OCI-LY7 (cell line): ENCODE measurements at regions of chr1 and their contacts with region 1.

Region 1: DNA sequence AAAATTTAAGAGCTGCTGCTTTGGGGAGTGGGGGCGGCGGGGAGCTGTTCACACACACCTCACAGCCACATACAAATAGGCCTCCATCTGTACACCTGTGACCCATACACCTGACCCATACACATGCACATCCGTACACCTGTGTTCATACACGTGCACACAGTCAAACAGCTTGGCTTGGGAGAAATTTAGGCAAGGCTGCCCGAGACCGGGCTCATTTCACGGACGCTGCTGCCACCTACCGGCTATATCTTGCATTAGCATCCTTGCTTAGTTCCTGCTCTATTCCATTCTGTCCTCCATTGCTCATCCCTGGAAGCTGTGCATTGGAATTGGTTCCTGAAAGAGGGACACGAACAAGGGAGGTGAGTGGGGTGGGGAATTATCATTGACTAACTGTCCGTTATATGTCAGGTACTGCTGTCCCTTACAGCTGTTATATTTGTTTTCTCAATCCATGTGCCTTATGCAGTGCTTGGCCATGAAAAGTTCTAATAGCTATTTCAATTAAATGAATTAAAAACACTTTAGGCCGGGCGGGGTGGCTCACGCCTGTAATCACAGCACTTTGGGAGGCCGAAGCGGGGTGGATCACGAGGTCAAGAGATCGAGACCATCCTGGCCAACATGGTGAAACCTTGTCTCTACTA is 37.1 kb upstream of the EPB41 start:
- DNase-seq: peak; percentile 84
- H3K4me3 ChIP-seq: no peak overlapping the region
- H3K27ac ChIP-seq: no peak overlapping the region
- H3K4me1 ChIP-seq: peaks cover 6% of the 10 kb centered on the region
- CTCF ChIP-seq: peak; percentile 98

Region 2: DNA sequence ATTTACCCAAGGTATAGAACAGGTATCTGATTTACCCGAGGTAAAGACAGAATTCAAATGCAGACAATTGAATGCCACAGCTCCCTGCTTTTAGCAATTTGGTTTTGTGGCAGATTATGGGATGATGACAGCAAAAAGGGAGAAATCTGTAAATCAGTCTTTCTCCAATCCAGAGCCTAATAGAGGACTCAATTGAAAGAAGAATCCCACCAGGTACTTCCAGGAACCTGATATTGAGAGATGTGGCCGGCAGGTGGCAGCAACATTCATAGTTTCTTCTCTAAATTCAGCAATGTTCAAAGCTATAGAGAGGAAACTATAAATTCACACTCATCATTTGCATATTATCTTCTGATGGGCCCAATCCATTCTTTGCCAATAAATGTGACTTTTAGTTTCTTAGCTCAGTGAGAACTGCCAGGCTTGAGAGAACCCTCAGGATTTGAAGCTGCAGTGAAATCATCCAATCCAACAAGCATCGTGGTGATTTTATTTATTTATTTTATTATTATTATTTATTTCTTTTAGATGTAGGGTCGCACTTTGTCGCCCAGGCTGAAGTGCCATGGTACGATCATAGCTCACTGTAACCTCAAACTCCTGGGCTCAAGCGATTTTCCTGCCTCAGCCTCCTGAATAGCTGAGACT is 517.5 kb before region 1 on chr1:
- CTCF ChIA-PET with region 1: no interaction called
- POLR2A ChIA-PET with region 1: no interaction called
- intact Hi-C with region 1: loop called (anchors 5 kb)
- DNase-seq: peak; percentile 77
- H3K4me3 ChIP-seq: no peak overlapping the region
- H3K27ac ChIP-seq: no peak overlapping the region
- H3K4me1 ChIP-seq: no peaks in the 10 kb centered on the region
- CTCF ChIP-seq: peak; percentile 92

Region 3: DNA sequence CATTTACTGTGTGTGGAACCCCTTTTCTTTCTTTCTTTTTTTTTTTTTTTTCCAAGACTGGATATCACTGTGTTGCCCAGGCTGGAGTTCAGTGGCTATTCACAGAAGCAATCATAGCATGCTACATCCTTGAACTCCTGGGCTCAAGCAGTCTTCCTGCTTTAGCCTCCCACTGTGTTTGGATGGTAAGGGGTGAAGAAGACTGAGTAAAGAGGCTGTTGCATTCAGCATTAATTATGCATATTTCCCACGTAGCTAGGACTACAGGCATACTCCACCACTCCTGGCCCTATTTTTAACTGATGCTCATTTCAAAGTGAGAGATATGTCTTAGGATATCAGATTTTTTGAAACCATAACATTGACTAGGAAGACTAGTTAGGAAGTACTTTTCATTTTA is 468.2 kb before region 1 on chr1:
- CTCF ChIA-PET with region 1: no interaction called
- POLR2A ChIA-PET with region 1: no interaction called
- intact Hi-C with region 1: loop called (anchors 5 kb)
- DNase-seq: no peak
- H3K4me3 ChIP-seq: no peak overlapping the region
- H3K27ac ChIP-seq: no peak overlapping the region
- H3K4me1 ChIP-seq: peaks cover 12% of the 10 kb centered on the region
- CTCF ChIP-seq: no peak

Region 4: GRCh38 chr1:28648474-28649198 is 228.6 kb before region 1 on chr1 and contains the start of gene RNU11:
- CTCF ChIA-PET with region 1: no interaction called
- POLR2A ChIA-PET with region 1: no interaction called
- intact Hi-C with region 1: no loop called
- DNase-seq: peak; percentile 98
- H3K4me3 ChIP-seq: peak within 1 kb of the TSS; percentile 69
- H3K27ac ChIP-seq: peak within 1 kb of the TSS; percentile 99
- H3K4me1 ChIP-seq: peaks cover 35% of the 10 kb centered on the region
- CTCF ChIP-seq: no peak
- total RNA-seq, gene RNU11: not detected in 2 replicates

Region 5: DNA sequence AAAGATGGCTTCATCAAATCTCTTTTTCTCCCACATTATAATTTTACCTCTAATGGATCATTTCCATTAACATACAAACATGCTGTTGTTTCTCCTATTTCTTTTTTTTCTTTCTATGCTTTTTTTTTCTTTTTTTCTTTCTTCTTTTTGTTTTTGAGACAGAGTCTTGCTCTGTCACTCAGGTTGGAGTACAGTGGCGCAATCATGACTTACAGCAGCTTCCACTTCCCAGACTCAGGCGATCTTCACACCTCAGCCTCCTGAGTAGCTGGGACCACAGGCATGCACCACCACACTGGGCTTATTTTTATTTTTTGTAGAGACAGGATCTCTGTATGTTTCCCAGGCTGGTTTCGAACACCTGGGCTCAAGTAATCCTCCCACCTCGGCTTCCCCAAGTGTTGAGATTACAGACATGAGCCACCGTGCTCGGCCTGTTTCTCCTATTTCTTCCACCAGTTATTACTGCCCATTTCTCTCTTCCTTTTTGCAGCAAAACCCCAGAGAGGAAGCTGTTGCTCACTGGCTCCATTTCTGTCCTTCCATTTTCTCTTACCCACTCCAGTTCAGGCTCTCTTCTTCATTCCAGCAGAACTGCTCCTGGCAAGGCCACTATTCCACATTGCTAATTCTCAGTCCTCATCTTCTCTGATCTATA is 97.4 kb before region 1 on chr1:
- CTCF ChIA-PET with region 1: interaction called, 3 read pairs
- POLR2A ChIA-PET with region 1: interaction called, 4 read pairs
- intact Hi-C with region 1: loop called (anchors 1 kb)
- DNase-seq: no peak
- H3K4me3 ChIP-seq: no peak overlapping the region
- H3K27ac ChIP-seq: no peak overlapping the region
- H3K4me1 ChIP-seq: no peaks in the 10 kb centered on the region
- CTCF ChIP-seq: no peak

Region 6: GRCh38 chr1:29050166-29050565 is 172.9 kb after region 1 on chr1:
- CTCF ChIA-PET with region 1: no interaction called
- POLR2A ChIA-PET with region 1: no interaction called
- intact Hi-C with region 1: no loop called
- DNase-seq: no peak
- H3K4me3 ChIP-seq: no peak overlapping the region
- H3K27ac ChIP-seq: no peak overlapping the region
- H3K4me1 ChIP-seq: no peaks in the 10 kb centered on the region
- CTCF ChIP-seq: no peak